ENCODE measurements at regions of chr2 and their contacts with region 1.

Region 1: GRCh38 chr2:36507408-36507812 is 90.6 kb downstream of the FEZ2 start:
- DNase-seq: no peak
- H3K4me3 ChIP-seq: no peak overlapping the region
- H3K27ac ChIP-seq: no peak overlapping the region
- H3K27me3 ChIP-seq: no peaks in the 10 kb centered on the region
- CTCF ChIP-seq: peak; percentile 95

Region 2: DNA sequence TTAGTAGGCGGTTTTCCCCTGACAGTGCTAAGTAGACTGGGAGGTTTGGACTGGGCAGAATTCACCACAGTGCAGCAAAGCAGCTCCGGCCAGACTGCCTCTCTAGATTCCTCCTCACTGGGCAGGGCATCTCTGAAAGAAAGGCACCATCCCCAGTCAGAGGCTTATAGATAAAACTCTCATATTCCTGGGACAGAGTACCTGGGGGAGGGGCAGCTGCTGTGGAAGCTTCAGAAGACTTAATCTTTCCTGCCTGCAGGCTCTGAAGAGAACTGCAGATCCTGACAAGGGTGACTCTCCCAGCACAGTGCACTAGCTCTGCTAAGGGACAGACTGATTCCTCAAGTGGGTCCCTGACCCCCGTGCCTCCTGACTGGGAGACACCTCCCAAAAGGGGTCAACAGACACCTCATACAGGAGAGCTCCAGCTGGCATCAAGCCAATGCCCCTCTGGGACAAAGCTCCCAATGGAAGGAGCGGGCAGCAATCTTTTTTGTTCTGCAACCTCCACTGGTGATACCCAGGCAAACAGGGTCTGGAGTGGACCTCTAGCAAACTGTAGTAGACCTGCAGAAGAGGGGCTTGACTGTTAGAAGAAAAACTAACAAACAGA is 418.6 kb before region 1 on chr2:
- CTCF ChIA-PET with region 1: no interaction called
- POLR2A ChIA-PET with region 1: no interaction called
- DNase-seq: no peak
- H3K4me3 ChIP-seq: no peak overlapping the region
- H3K27ac ChIP-seq: no peak overlapping the region
- H3K27me3 ChIP-seq: no peaks in the 10 kb centered on the region
- CTCF ChIP-seq: no peak

Region 3: DNA sequence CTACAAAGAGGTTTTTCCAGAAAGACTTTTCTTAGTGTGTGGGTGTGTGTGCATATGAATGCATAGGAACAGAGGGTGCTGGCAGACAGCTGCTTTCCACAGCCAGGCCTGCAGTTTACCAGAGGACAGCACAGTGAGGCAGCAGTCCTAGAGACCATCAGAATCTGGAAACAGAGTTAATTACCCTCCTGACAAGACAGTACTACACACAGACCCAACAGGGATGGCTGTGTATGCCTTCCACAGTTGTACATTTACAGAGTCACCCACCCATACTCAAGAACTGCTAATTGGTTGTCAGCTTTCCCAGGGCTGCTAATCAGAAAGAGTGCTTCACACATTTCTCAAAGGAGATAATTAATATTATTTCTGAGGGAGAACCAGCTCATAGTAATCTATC is 14.1 kb before region 1 on chr2:
- CTCF ChIA-PET with region 1: interaction called, 12 read pairs
- POLR2A ChIA-PET with region 1: no interaction called
- DNase-seq: no peak
- H3K4me3 ChIP-seq: no peak overlapping the region
- H3K27ac ChIP-seq: no peak overlapping the region
- H3K27me3 ChIP-seq: no peaks in the 10 kb centered on the region
- CTCF ChIP-seq: no peak

Region 4: DNA sequence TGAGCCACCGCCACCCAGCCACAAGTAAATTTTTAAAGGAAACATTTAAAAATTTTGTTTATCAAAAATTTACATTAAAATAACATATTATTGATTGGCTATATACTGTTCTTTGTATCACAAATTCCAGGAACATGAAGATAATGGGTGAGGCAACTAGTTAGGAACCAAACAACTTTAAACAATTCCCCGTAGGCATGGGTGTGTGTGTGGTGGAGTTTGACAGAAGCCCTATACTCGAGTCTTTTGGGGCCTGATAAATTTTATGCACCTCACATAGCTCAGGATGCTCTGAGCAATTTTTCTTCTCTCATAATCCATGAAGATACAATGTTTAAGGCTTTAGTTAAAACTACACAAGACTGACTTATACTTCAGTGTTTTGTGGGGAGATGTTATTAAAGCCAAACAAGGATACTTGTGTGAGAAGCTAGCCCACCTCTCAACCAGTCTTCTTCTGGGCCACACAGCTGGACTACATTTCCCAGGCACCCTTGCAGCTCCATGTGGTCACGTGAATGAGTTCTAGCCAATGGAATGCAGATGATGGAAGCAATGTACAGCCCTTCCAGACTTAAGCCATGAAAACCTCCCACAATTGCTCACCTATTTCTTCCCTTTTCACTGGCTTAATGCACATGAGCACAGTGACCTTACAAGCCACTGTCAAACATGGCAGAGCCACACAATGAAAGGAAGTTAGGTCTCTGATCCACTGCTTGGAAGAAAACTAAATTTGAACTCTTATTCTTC is 110.8 kb after region 1 on chr2:
- CTCF ChIA-PET with region 1: no interaction called
- POLR2A ChIA-PET with region 1: no interaction called
- DNase-seq: peak; percentile 30
- H3K4me3 ChIP-seq: no peak overlapping the region
- H3K27ac ChIP-seq: no peak overlapping the region
- H3K27me3 ChIP-seq: no peaks in the 10 kb centered on the region
- CTCF ChIP-seq: no peak